Endothelial cell of umbilical vein (primary cell): ENCODE measurements at regions of chr17 and their contacts with region 1.

Region 1: DNA sequence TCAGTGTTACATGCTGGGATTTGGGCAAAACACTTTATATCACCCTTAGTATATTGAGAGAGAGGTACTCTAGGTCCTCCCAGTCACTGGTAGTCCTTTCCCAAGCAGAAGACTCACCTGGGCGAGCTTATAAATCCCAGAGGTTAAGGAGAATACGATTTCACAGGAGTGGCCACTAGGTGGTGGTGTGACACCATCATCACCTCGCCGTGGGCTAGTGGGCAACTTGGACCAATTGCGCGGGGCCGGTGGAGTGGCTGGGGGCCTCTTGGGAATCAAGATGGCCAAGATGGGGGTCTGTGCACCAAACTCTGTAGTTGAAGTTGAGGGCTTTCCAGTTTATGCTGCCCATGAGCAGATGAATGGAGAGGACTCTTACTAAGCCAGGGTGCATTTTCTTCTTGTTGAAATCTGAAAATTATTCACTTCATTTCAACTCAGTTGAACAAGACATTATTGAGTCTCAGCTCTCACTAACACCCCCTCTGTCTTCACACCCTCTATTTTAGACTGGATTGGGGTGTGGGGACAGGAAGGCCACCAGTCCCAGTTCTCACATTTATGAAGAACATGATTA is 38.2 kb upstream of the PIRT start:
- DNase-seq: peak; percentile 23
- H3K4me3 ChIP-seq: no peak overlapping the region
- H3K27ac ChIP-seq: no peak overlapping the region
- H3K4me1 ChIP-seq: no peaks in the 10 kb centered on the region
- H3K27me3 ChIP-seq: no peaks in the 10 kb centered on the region
- CTCF ChIP-seq: peak; percentile 25 to 65
- POLR2A ChIP-seq: no peak

Region 2: DNA sequence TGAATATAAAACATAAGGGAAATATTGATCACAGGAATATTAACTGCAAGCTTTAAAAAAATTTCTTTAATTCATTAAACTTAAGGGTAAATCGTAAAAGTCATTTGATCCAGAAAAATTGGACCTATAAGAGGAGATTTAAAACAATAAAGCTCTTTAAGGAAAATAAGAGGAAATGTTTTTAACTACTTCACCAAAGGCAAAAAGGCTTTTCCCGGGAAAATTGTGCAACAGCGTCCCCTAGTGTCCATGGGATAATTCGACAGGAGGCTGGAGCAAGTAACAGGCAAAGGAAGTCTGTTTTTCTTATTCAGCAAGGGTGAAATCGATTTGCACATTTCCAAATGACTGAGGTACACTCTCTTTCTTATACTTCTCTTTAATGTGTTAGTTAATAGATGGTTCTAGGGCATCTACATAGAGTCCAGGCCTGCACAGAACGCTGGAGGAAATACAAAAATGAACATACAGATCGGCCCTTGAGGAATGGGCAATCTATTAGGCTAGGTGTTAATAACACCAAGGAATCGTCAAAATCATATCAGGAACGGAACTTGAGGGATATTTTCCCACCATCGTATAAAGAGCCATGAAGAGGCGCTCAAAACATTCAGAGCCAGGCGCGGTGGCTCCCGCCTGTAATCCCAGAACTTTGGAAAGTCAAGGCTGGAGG is 1059.8 kb after region 1 on chr17:
- CTCF ChIA-PET with region 1: interaction called, 51 read pairs
- POLR2A ChIA-PET with region 1: no interaction called
- dilution Hi-C with region 1: no loop called
- intact Hi-C with region 1: no loop called
- DNase-seq: peak; percentile 14
- H3K4me3 ChIP-seq: no peak overlapping the region
- H3K27ac ChIP-seq: no peak overlapping the region
- H3K4me1 ChIP-seq: no peaks in the 10 kb centered on the region
- H3K27me3 ChIP-seq: no peaks in the 10 kb centered on the region
- CTCF ChIP-seq: peak; percentile 58 to 71
- POLR2A ChIP-seq: no peak

Region 3: DNA sequence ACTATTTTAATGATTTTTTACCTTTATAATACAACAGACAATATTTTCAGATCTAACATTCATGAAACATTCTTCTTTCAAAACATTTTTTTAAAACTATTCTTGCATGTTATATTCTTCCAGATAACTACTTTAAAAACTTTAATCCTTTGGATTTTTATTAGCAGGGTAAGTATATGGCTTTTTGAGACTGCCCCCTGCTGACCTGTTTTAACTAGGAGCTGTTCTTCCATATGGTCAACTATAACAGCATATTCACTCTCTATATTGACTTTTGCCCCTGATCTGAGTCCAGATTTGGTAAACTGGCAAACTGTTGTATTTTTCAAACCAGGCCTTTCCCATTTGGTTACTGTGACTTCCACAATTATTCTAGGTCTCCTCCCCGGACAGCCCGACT is 1104.7 kb after region 1 on chr17:
- CTCF ChIA-PET with region 1: interaction called, 78 read pairs
- POLR2A ChIA-PET with region 1: no interaction called
- dilution Hi-C with region 1: no loop called
- intact Hi-C with region 1: no loop called
- DNase-seq: no peak
- H3K4me3 ChIP-seq: no peak overlapping the region
- H3K27ac ChIP-seq: no peak overlapping the region
- H3K4me1 ChIP-seq: no peaks in the 10 kb centered on the region
- H3K27me3 ChIP-seq: no peaks in the 10 kb centered on the region
- CTCF ChIP-seq: peak; percentile 4 to 11
- POLR2A ChIP-seq: no peak